Activated T-helper 1 cell treated with anti-CD3 and anti-CD28 coated beads, Interleukin-12 subunit alpha, Interleukin-12 subunit beta, Interleukin-2, Interleukin-4 antibody, amounts not matched to agents 30 ng/mL and 10 ng/mL and 1 ng/mL, durations not matched to agents 14 hours and 24 hours and 36 hours (primary cell): ENCODE measurements at regions of chrX and their contacts with region 1.

Region 1: DNA sequence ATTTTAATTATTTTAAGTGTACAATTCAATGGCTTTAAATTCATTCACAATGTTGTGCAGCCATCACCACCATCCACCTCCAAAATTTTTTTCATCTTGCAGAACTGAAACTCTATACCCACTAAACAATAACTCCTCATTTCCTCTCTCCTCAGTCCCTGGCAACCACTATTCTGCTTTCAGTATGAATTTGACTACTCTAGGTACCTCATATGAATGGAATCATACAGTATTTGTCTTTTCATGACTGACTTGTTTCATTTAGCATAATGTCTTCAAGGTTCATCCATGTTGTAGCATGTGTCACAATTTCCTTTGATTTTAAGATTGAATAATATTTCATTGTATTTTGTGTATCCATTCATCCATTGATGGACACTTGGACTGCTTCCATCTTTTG is 46.9 kb downstream of the KIF4A start:
- DNase-seq: peak; percentile 1
- H3K4me3 Mint-ChIP-seq: no peak overlapping the region
- H3K27ac Mint-ChIP-seq: peak overlapping the region; percentile 2
- H3K4me1 Mint-ChIP-seq: peaks cover 26% of the 10 kb centered on the region
- H3K27me3 Mint-ChIP-seq: no peaks in the 10 kb centered on the region

Region 2: DNA sequence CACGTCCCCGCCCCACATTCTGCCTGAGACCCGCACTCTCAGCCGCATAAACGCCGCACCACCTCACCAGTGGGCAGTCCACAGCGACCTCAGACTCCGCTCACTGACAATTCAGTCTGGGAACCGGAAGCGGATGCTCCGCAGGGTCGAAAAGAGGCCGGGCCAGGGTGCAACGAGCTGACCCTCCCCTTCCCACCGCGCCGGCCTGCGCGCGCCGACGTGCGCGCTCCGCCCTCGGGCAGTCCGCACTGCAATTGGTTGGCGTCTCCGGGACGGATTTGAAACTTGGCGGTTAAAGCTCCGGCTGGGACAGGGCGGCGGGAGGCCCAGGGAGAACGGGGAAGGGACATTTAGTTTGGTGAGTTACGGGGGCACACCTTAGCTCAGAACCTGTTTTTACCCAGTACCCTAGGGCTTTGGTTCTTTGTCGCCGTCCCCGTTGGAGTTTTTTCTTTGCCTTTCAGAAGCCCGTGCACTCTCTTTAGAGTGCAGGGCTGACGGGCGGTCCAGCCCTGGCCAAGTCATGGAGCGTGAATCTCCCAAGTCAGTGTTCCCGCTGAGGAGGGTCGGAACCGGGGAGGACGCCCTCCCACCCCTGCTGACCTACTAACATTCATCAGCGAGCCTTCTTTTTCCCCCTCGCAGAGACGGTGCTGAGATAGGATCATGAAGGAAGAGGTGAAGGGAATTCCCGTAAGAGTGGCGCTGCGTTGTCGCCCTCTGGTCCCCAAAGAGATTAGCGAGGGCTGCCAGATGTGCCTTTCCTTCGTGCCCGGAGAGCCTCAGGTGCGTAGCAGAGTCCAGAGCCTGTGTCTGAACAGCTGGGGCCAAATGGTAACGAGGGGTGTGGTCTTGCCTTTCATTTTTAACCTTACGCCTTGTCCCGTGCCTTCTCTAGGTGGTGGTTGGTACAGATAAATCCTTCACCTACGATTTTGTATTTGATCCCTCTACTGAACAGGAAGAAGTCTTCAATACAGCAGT is 46.7 kb before region 1 on chrX and contains the starts of genes KIF4A and PDZD11:
- intact Hi-C with region 1: loop called (anchors 5 kb)
- DNase-seq: peak; percentile 81
- H3K4me3 Mint-ChIP-seq: peak within 1 kb of the TSS; percentile 92
- H3K27ac Mint-ChIP-seq: peak within 1 kb of the TSS; percentile 72
- H3K4me1 Mint-ChIP-seq: peaks cover 19% of the 10 kb centered on the region
- H3K27me3 Mint-ChIP-seq: no peaks in the 10 kb centered on the region
- total RNA-seq, gene KIF4A: 18.7 and 19.4 TPM in 2 replicates
- total RNA-seq, gene PDZD11: 28.7 and 31.9 TPM in 2 replicates

Region 3: GRCh38 chrX:70354716-70355115 is 17.9 kb after region 1 on chrX:
- intact Hi-C with region 1: no loop called
- DNase-seq: no peak
- H3K4me3 Mint-ChIP-seq: no peak overlapping the region
- H3K27ac Mint-ChIP-seq: no peak overlapping the region
- H3K4me1 Mint-ChIP-seq: no peaks in the 10 kb centered on the region
- H3K27me3 Mint-ChIP-seq: no peaks in the 10 kb centered on the region

Region 4: DNA sequence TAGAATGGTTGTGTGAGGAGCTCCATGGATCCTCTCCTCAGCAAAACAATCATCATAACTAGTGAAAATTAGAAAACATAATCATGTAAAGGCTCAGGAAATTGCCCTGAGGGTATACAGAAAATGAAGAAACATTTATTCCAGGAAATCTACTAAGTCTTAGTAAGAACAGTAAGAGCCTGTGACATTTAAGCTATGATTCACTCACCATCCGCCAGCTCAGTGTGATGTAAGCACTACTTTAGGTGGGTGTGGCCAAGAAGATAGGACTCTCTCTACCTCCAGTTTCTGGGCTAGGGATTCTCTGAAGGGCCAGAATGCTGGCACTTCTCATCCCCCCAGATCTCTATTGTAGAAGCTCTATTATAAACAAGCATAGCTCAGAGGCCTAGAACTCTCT is 255.3 kb after region 1 on chrX:
- intact Hi-C with region 1: loop called (anchors 10 kb)
- DNase-seq: peak; percentile 5
- H3K4me3 Mint-ChIP-seq: no peak overlapping the region
- H3K27ac Mint-ChIP-seq: peak overlapping the region; percentile 73
- H3K4me1 Mint-ChIP-seq: peaks cover 25% of the 10 kb centered on the region
- H3K27me3 Mint-ChIP-seq: no peaks in the 10 kb centered on the region

Region 5: GRCh38 chrX:70664726-70665125 is 328.0 kb after region 1 on chrX:
- intact Hi-C with region 1: loop called (anchors 5 kb)
- DNase-seq: no peak
- H3K4me3 Mint-ChIP-seq: no peak overlapping the region
- H3K27ac Mint-ChIP-seq: no peak overlapping the region
- H3K4me1 Mint-ChIP-seq: no peaks in the 10 kb centered on the region
- H3K27me3 Mint-ChIP-seq: peaks cover 4% of the 10 kb centered on the region

Region 6: GRCh38 chrX:71068049-71068763 is 731.4 kb after region 1 on chrX and contains the start of gene SNX12:
- intact Hi-C with region 1: no loop called
- DNase-seq: peak; percentile 85
- H3K4me3 Mint-ChIP-seq: peak within 1 kb of the TSS; percentile 98
- H3K27ac Mint-ChIP-seq: peak within 1 kb of the TSS; percentile 96
- H3K4me1 Mint-ChIP-seq: peaks cover 22% of the 10 kb centered on the region
- H3K27me3 Mint-ChIP-seq: peaks cover 7% of the 10 kb centered on the region
- total RNA-seq, gene SNX12: 47.9 and 51.9 TPM in 2 replicates